Right ventricle myocardium superior (tissue), 1 donor: ENCODE measurements at regions of chr15 and their contacts with region 1.

Region 1: GRCh38 chr15:101501703-101502373 is 12.3 kb upstream of the PCSK6 start:
- DNase-seq: peak; percentile 64
- ATAC-seq: peak; percentile 34

Region 2: DNA sequence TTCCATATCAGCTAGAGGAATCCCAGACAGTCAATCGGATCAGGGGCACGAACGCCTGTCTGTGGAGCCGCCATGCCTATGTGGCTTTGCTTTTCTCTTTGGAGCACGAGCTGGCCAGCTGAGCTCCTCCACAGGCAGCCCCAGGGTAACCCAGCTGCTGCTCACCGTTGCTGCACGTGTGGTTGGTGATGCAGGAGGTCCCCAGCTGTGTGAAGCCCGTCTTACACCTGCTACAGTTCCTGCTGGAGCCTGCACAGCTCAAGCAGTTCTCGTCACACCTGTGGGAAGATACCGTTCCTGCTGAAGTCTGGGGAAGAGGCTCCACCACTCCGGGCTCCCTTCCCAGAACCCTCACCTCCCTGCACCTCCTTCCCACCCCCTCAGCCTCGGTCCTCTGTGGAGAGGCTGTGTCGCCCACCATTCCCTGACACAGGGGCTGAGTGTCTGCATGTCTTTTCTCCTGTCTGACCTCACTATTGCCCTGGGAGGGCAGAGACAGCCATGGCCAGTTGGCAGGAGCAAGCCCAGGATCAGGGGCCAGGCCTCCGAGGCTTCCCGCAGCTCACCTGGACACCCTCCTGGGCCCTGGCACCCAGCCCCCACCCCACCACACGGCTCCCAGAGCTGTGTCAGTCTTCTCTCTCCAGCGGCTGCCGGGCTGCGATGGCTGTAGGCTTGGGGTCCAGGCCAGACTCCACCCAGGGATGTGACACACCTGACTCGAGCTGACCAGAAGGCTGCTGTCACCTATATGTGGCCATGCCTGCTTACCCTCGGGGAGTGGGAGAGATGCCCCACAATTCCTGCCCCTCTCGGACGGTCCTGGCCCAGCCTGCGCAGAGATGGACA is 194.6 kb before region 1 on chr15:
- intact Hi-C with region 1: loop called (anchors 10 kb)
- DNase-seq: no peak
- ATAC-seq: peak; percentile 18

Region 3: GRCh38 chr15:101368086-101368780 is 133.6 kb before region 1 on chr15:
- intact Hi-C with region 1: loop called (anchors 5 kb)
- DNase-seq: peak; percentile 71
- ATAC-seq: peak; percentile 84

Region 4: DNA sequence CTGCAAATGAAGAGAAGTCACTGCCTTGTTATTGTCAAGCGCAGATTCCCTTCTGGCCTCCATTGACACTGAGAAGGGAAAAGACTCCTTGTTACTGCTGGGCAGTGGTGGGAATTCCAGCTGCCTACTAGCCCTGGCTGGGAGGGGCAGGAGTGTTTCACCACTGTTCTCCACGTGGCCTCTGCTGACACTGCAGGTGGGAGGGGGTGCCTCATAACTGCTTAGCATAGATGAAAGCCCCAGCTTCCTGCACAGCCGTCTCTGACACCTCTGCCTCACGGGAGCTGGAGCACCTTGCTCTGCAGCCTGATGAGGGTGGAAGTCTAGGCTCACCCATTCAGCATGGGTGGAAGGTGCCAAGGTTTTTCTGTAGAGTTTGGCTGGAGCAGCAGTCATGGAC is 98.2 kb after region 1 on chr15:
- intact Hi-C with region 1: no loop called
- DNase-seq: no peak
- ATAC-seq: no peak

Region 5: DNA sequence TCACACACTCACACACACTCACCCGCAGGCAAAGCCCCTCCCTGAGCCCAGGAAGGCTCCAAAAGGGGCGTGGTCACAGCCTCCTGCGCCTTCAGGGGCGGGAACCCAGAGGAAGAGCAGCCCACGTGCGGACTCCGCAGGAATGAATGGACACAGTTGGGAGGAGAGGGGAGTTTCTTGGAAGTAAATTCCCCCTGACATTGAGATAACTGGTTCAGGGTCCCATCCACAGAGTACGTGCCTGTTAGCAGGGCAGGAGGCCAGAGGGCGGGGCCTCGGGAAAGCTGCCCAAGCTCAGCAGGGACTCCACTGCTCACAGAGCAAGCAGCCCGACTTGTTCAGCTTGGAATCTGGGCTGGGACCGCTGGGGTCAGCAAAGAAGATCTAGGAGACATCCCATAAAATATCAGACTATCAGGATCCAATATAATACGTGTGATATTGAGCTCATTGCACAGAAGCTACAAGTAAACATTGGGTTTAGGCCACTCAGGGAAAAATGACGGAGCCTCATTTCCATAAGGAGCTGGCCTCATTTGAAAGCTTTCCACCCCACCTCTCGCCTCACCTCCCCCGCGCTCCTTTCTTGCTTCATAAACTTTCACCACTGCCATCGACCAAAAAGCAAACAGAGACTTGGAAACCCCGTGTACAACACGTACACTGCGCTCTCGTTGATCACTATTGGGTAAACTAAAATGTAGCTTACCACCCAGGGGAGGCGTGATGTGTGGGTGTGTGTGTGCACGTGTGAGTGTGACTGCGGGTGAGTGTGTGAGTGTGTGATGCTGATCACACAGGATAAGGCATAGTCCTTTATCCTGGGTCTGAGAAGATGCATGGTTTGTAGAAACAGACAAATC is 114.4 kb after region 1 on chr15:
- intact Hi-C with region 1: loop called (anchors 10 kb)
- DNase-seq: peak; percentile 88
- ATAC-seq: peak; percentile 67